ENCODE measurements at regions of chr1 and their contacts with region 1.

Region 1: DNA sequence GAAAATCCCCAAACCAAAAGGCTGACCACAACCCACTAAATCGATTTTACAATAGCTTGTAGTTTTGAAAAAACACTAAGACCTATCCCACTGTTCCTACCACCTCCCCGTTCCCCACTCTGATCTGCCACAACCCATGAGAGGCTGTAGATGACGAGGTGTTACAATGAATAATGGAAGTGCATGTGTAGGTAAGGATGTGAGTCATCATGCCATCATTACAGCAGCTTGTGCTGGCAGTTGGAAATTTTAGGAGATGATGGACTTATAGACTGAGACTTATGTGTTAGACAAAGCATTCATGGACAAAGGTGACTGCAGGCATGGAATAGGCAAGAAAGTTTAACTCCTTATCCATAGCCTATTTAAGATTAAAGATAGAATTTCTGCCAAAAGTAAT is 184.7 kb upstream of the CACYBP start:
- DNase-seq: peak; percentile 60
- H3K4me3 Mint-ChIP-seq: no peak overlapping the region
- H3K27ac Mint-ChIP-seq: peak overlapping the region; percentile 14
- H3K4me1 Mint-ChIP-seq: peaks cover 18% of the 10 kb centered on the region
- H3K27me3 Mint-ChIP-seq: no peaks in the 10 kb centered on the region

Region 2: GRCh38 chr1:174800216-174800851 is 14.7 kb before region 1 on chr1:
- intact Hi-C with region 1: loop called (anchors 2 kb)
- DNase-seq: peak; percentile 74
- H3K4me3 Mint-ChIP-seq: no peak overlapping the region
- H3K27ac Mint-ChIP-seq: no peak overlapping the region
- H3K4me1 Mint-ChIP-seq: peaks cover 11% of the 10 kb centered on the region
- H3K27me3 Mint-ChIP-seq: no peaks in the 10 kb centered on the region

Region 3: GRCh38 chr1:174892016-174892415 is 77.0 kb after region 1 on chr1:
- intact Hi-C with region 1: no loop called
- DNase-seq: no peak
- H3K4me3 Mint-ChIP-seq: no peak overlapping the region
- H3K27ac Mint-ChIP-seq: no peak overlapping the region
- H3K4me1 Mint-ChIP-seq: peaks cover 7% of the 10 kb centered on the region
- H3K27me3 Mint-ChIP-seq: no peaks in the 10 kb centered on the region

Measured in activated CD4-positive, alpha-beta T cell treated with anti-CD3 and anti-CD28 coated beads, Interleukin-2, amount 10 ng/mL, durations not matched to agents 24 days and 14 days (primary cell).